ENCODE measurements at regions of chr7 and their contacts with region 1.

Region 1: DNA sequence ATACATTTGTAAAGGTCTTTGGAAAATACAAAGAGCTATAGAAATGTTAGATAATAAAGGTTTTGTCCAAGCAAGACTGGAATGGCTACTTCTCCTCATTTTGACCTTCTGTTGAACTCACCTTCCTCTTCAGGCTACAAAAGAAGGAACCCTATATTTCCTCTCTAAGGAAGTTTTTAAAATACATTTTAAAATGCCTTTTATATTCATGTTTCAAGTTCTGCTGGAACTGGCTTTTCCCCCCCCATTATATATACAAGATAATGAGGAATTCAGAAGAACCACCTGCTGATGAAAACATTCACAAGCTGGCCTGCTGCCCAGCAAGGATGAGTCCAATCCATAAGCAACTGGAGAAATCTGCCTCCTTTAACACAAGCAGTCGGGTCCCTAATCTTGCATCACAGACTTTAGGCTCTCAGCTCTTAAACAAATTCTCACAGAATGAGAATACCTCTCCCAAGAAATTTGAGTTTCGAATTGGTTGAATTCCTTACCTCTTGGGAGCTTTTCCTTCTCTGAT is 44.6 kb downstream of the MTERF1 start:
- DNase-seq: no peak
- ATAC-seq: peak; percentile 36; the same call in 1 of the 2 replicates
- H3K4me3 ChIP-seq: no peak overlapping the region
- H3K27ac ChIP-seq: no peak overlapping the region
- H3K4me1 ChIP-seq: peaks cover 0 to 10% of the 10 kb centered on the region in 2 experiments; a peak in 1 of 4 replicates
- H3K27me3 ChIP-seq: no peaks in the 10 kb centered on the region
- CTCF ChIP-seq: no peak
- POLR2A ChIP-seq: no peak
- RAD21 ChIP-seq: no peak

Region 2: GRCh38 chr7:91771921-91772815 is 63.7 kb before region 1 on chr7:
- CTCF ChIA-PET with region 1: no interaction called
- POLR2A ChIA-PET with region 1: no interaction called
- RAD21 ChIA-PET with region 1: no interaction called
- intact Hi-C with region 1: no loop called
- DNase-seq: no peak
- ATAC-seq: no peak
- H3K4me3 ChIP-seq: no peak overlapping the region
- H3K27ac ChIP-seq: no peak overlapping the region
- H3K4me1 ChIP-seq: no peaks in the 10 kb centered on the region
- H3K27me3 ChIP-seq: no peaks in the 10 kb centered on the region
- CTCF ChIP-seq: no peak
- POLR2A ChIP-seq: no peak
- RAD21 ChIP-seq: no peak

Region 3: DNA sequence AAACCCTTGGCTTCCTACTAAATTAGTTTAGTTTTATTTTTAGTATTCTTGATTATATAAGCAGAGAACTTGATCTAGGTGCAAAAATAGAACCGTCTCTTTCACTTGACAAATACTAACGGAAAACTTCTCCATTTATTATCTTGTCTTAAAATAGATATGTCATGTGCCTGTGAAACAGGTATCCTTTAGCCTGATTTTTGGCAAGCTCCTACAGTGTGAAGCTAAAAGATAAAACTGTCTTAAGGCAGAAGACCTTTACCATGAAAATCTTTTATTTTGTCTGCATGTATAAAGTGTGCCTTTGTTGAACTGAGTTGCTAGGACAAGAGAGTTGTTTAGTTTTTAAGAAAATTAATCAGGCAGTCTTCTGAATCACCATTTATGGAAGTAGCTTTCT is 207.7 kb after region 1 on chr7:
- CTCF ChIA-PET with region 1: no interaction called
- POLR2A ChIA-PET with region 1: no interaction called
- RAD21 ChIA-PET with region 1: no interaction called
- intact Hi-C with region 1: loop called (anchors 2 kb)
- DNase-seq: no peak
- ATAC-seq: no peak
- H3K4me3 ChIP-seq: no peak overlapping the region
- H3K27ac ChIP-seq: no peak overlapping the region
- H3K4me1 ChIP-seq: peaks cover 0 to 4% of the 10 kb centered on the region in 2 experiments; a peak in 2 of 4 replicates
- H3K27me3 ChIP-seq: no peaks in the 10 kb centered on the region
- CTCF ChIP-seq: no peak
- POLR2A ChIP-seq: no peak
- RAD21 ChIP-seq: no peak

Region 4: DNA sequence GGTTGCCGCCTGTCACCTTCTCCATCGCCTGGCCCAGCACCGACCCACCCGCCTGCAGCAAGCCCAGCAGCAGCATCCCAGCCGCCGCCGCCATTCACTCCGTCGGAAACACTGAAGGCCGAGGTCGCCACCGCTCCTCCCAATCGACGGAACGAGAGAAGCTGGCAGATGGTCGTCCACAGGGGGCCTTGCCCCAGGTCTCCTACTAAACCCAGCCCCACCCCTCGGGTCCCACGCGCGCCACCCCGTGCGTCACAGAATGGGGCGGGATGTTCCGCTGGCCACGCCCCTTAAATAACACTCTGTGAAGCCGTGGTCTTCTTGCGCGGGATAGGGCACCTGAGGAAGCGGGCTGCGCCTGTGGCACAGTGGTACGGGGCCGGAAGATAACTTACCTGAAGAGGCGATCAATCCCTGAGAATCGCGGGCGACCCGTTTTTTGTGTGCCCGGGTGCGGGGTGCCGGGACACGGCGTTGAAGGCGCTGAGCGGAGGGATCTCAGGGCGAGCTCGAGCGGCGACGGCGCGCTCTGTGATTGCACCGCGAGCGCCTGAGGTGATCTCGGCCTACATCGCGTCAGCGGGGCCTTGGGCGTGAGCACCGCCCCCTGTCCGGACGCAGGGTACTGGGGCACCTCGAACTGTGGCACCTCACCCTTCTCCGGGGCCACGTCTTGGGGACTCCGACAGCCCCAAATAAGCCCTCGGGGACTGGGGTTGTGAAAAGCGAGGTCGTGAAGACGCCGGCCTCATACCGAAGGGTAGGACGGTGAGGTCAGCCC is 298.6 kb after region 1 on chr7 and contains the start of gene CYP51A1:
- CTCF ChIA-PET with region 1: no interaction called
- POLR2A ChIA-PET with region 1: no interaction called
- RAD21 ChIA-PET with region 1: no interaction called
- intact Hi-C with region 1: no loop called
- DNase-seq: peak; percentile 90
- ATAC-seq: peak; percentile 88
- H3K4me3 ChIP-seq: peak within 1 kb of the TSS; percentile 84 to 97
- H3K27ac ChIP-seq: peak within 1 kb of the TSS; percentile 94
- H3K4me1 ChIP-seq: peaks cover 5 to 24% of the 10 kb centered on the region in 2 experiments; a peak in 2 of 4 replicates
- H3K27me3 ChIP-seq: no peaks in the 10 kb centered on the region
- CTCF ChIP-seq: no peak
- POLR2A ChIP-seq: peak; percentile 54
- RAD21 ChIP-seq: no peak
- total RNA-seq, gene CYP51A1: 85.7 TPM